CD8-positive, alpha-beta memory T cell (primary cell): ENCODE measurements at regions of chr14 and their contacts with region 1.

Region 1: GRCh38 chr14:23095196-23096108 is at the start of gene C14orf119:
- DNase-seq: peak; percentile 99 to 100 (median 100)
- H3K4me3 ChIP-seq: peak within 1 kb of the TSS; percentile 97
- H3K4me3 Mint-ChIP-seq: no peak within 1 kb of the TSS
- H3K27ac ChIP-seq: peak within 1 kb of the TSS; percentile 97
- H3K27ac Mint-ChIP-seq: no peak within 1 kb of the TSS
- H3K4me1 ChIP-seq: peaks cover 38% of the 10 kb centered on the region
- H3K4me1 Mint-ChIP-seq: peaks cover 13 to 41% (median 36%) of the 10 kb centered on the region in 3 donors
- H3K27me3 ChIP-seq: no peaks in the 10 kb centered on the region
- H3K27me3 Mint-ChIP-seq: no peaks in the 10 kb centered on the region
- total RNA-seq, gene C14orf119: 52.5 to 55.6 TPM

Region 2: GRCh38 chr14:22918804-22919600 is 176.4 kb before region 1 on chr14 and contains the start of gene RBM23:
- CTCF ChIA-PET with region 1: no interaction called
- POLR2A ChIA-PET with region 1: interaction called, 10 read pairs
- DNase-seq: peak; percentile 99 to 100 (median 100)
- H3K4me3 ChIP-seq: peak within 1 kb of the TSS; percentile 95
- H3K4me3 Mint-ChIP-seq: peak within 1 kb of the TSS; percentile 91 to 100 (median 97)
- H3K27ac ChIP-seq: peak within 1 kb of the TSS; percentile 100
- H3K27ac Mint-ChIP-seq: peak within 1 kb of the TSS; percentile 99 to 100 (median 100)
- H3K4me1 ChIP-seq: peaks cover 30% of the 10 kb centered on the region
- H3K4me1 Mint-ChIP-seq: peaks cover 36 to 56% (median 56%) of the 10 kb centered on the region in 3 donors
- H3K27me3 ChIP-seq: no peaks in the 10 kb centered on the region
- H3K27me3 Mint-ChIP-seq: peaks cover 0 to 7% of the 10 kb centered on the region in 2 donors
- total RNA-seq, gene RBM23: 83.6 to 88.8 TPM

Region 3: GRCh38 chr14:23068476-23069412 is 26.7 kb before region 1 on chr14:
- CTCF ChIA-PET with region 1: interaction called, 31 read pairs
- POLR2A ChIA-PET with region 1: interaction called, 9 read pairs
- DNase-seq: peak; percentile 49 to 79 (median 72)
- H3K4me3 ChIP-seq: no peak overlapping the region
- H3K4me3 Mint-ChIP-seq: peak overlapping the region in 6 of 7 donors; percentile 10 to 72 (median 48)
- H3K27ac ChIP-seq: no peak overlapping the region
- H3K27ac Mint-ChIP-seq: peak overlapping the region; percentile 49 to 96 (median 72)
- H3K4me1 ChIP-seq: peaks cover 28% of the 10 kb centered on the region
- H3K4me1 Mint-ChIP-seq: peaks cover 37 to 50% (median 41%) of the 10 kb centered on the region in 3 donors
- H3K27me3 ChIP-seq: no peaks in the 10 kb centered on the region
- H3K27me3 Mint-ChIP-seq: no peaks in the 10 kb centered on the region

Region 4: GRCh38 chr14:23120541-23121251 is 25.2 kb after region 1 on chr14:
- CTCF ChIA-PET with region 1: interaction called, 18 read pairs
- POLR2A ChIA-PET with region 1: interaction called, 32 read pairs
- DNase-seq: peak; percentile 58 to 85 (median 76)
- H3K4me3 ChIP-seq: peak overlapping the region; percentile 59
- H3K4me3 Mint-ChIP-seq: peak overlapping the region in 6 of 7 donors; percentile 38 to 77 (median 65)
- H3K27ac ChIP-seq: peak overlapping the region; percentile 10
- H3K27ac Mint-ChIP-seq: peak overlapping the region; percentile 77 to 96 (median 80)
- H3K4me1 ChIP-seq: peaks cover 53% of the 10 kb centered on the region
- H3K4me1 Mint-ChIP-seq: peaks cover 28 to 42% (median 28%) of the 10 kb centered on the region in 3 donors
- H3K27me3 ChIP-seq: no peaks in the 10 kb centered on the region
- H3K27me3 Mint-ChIP-seq: peaks cover 3 to 5% of the 10 kb centered on the region in 2 donors

Region 5: GRCh38 chr14:23320774-23321571 is 225.5 kb after region 1 on chr14 and contains the start of gene PABPN1:
- CTCF ChIA-PET with region 1: interaction called, 11 read pairs
- POLR2A ChIA-PET with region 1: interaction called, 20 read pairs
- DNase-seq: peak; percentile 94 to 99 (median 99)
- H3K4me3 ChIP-seq: peak within 1 kb of the TSS; percentile 79
- H3K4me3 Mint-ChIP-seq: peak within 1 kb of the TSS; percentile 91 to 99 (median 93)
- H3K27ac ChIP-seq: peak within 1 kb of the TSS; percentile 83
- H3K27ac Mint-ChIP-seq: peak within 1 kb of the TSS; percentile 91 to 99 (median 98)
- H3K4me1 ChIP-seq: peaks cover 23% of the 10 kb centered on the region
- H3K4me1 Mint-ChIP-seq: peaks cover 29 to 35% (median 30%) of the 10 kb centered on the region in 3 donors
- H3K27me3 ChIP-seq: no peaks in the 10 kb centered on the region
- H3K27me3 Mint-ChIP-seq: peaks cover 3 to 9% of the 10 kb centered on the region in 2 donors
- total RNA-seq, gene PABPN1: 308 TPM